Caco-2 (cell line): ENCODE measurements at regions of chr1 and their contacts with region 1.

Region 1: DNA sequence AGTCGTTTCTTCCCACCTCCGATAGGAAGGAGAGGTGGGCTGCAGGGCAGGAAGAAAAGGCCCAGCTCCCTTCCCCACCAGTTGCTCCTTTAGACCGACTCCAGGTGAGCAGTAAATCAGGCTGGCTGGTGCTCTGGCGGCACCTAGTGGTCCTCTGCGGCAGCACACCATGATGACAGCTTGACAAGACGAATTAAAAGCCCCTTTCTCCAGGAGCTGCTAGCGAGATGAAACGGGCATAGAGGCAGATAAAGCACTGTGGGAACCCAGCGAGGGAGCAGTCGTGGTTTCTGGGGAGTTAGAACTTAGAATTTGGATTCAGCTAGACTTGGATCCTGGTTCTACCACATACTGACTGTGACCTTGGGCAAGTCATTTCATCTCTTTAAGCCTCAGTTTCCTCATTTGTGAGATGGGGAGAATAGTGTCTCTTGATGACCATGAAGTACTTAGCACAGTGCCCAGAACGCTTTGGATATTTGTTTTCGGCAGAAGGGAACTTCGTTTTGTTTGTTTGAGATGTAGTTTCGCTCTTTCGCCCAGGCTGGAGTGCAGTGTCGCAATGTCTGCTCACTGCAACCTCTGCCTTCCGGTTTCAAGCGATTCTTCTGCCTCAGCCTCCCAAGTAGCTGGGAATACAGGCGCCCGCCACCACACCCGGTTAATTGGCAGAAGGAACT is 21.8 kb upstream of the COL9A2 start:
- DNase-seq: peak; percentile 83 to 84
- H3K4me3 ChIP-seq: no peak overlapping the region
- H3K4me3 Mint-ChIP-seq: peak overlapping the region; percentile 7
- H3K27ac Mint-ChIP-seq: no peak overlapping the region
- H3K4me1 ChIP-seq: no peaks in the 10 kb centered on the region
- H3K4me1 Mint-ChIP-seq: peaks cover 8% of the 10 kb centered on the region
- H3K27me3 ChIP-seq: no peaks in the 10 kb centered on the region
- H3K27me3 Mint-ChIP-seq: no peaks in the 10 kb centered on the region
- CTCF ChIP-seq: peak; percentile 83 to 89

Region 2: DNA sequence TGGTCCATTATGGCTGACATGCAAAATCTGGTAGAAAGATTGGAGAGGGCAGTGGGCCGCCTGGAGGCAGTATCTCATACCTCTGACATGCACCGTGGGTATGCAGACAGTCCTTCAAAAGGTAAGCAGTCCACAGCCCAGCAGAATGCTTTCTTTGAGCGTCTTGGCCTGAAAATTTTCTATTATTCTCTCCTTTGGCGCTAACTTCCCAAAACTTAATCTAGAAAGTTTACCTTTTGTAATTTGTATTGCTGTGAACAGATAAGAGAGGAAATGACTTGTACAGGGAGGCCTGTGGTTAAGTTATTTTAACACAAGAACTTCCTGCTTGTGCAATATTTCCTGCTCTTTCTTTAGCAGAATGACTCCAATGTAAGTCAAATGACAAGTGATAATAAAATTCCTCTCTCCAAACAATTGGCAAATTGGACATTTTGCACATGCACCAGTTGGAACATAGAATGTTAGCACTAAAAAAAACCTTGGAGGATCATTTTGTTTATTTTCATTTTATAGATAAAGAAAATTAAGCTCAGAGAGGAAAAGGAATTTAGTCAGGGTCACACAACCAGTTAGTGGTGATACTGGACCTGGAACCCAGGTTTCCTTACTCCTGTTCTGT is 279.4 kb before region 1 on chr1:
- CTCF ChIA-PET with region 1: no interaction called
- POLR2A ChIA-PET with region 1: no interaction called
- intact Hi-C with region 1: no loop called
- DNase-seq: no peak
- H3K4me3 ChIP-seq: no peak overlapping the region
- H3K4me3 Mint-ChIP-seq: no peak overlapping the region
- H3K27ac Mint-ChIP-seq: no peak overlapping the region
- H3K4me1 ChIP-seq: peaks cover 11% of the 10 kb centered on the region; the same call in 1 of the 2 replicates
- H3K4me1 Mint-ChIP-seq: peaks cover 7% of the 10 kb centered on the region
- H3K27me3 ChIP-seq: no peaks in the 10 kb centered on the region
- H3K27me3 Mint-ChIP-seq: no peaks in the 10 kb centered on the region
- CTCF ChIP-seq: no peak

Region 3: DNA sequence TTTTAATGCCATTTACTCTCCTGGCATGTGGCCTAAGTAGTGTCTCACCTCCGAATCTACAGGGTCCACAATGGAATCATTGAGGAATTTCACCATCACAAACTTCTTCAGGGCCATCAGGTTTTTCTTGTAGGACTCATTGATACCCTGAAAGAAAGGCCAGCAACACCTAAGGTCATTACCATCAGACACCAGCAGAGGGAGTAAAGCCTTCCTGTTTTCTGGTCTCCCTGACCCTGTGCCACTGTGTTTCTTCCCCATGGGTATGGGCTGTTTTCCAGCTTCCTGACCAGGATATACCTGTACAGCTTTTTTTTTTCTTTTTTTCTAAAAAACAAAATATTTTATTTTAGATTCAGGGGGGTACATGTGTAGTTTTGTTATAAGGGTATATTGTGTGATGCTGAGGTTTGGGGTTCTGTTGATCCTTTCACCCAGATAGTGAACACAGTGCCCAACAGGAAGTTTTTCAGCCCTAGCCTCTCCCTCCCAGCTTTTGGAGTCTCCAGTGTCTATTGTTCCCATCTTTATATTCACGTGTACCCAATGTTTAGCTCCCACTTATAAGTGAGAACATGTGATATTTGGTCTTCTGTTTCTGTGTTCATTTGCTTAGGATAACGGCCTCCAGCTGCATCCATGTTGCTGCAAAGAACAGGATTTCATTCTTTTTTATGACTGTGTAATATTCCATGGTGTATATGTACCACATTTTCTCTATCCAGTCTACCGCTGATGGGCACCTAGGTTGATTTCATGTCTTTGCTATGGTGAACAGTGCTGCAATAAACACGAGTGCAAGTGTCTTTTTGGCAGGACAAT is 260.2 kb before region 1 on chr1:
- CTCF ChIA-PET with region 1: interaction called, 6 read pairs
- POLR2A ChIA-PET with region 1: no interaction called
- intact Hi-C with region 1: loop called (anchors 1 kb)
- DNase-seq: peak; percentile 58 to 75
- H3K4me3 ChIP-seq: no peak overlapping the region
- H3K4me3 Mint-ChIP-seq: no peak overlapping the region
- H3K27ac Mint-ChIP-seq: no peak overlapping the region
- H3K4me1 ChIP-seq: no peaks in the 10 kb centered on the region
- H3K4me1 Mint-ChIP-seq: no peaks in the 10 kb centered on the region
- H3K27me3 ChIP-seq: no peaks in the 10 kb centered on the region
- H3K27me3 Mint-ChIP-seq: no peaks in the 10 kb centered on the region
- CTCF ChIP-seq: peak; percentile 62 to 70

Region 4: DNA sequence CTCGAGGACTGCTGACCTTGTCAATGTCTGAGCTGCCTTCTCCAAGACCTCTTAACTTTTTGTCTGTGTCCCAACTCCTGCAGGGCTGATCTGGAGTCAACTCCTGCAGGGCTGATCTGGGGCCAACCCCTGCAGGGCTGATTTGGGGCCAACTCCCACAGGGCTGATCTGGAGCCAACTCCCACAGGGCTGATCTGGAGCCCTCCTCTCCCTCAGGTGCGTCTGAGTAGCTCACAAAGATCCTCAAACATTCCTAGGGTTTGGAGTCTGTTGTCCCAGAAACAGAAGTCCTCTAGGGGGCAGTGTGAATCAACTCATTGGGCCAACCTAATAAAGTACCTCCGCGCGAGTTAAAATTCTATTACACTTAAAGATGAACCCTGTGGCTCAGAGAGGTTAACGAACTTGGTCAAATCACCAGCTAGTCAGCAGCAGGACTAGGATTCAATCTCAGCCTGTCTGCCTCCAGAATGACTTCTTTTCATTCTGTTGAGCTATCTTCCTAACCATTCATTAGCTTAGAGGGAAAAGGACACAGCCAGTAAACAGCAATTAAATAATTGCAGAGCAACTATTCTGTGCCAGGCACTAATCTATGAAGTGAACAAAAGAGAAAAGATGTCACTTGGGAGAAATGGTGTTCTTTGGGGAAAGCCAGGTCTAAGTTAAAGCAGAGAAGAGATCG is 194.9 kb before region 1 on chr1:
- CTCF ChIA-PET with region 1: interaction called, 29 read pairs
- POLR2A ChIA-PET with region 1: no interaction called
- intact Hi-C with region 1: loop called (anchors 1 kb)
- DNase-seq: peak; percentile 52 to 70
- H3K4me3 ChIP-seq: no peak overlapping the region
- H3K4me3 Mint-ChIP-seq: peak overlapping the region; percentile 41
- H3K27ac Mint-ChIP-seq: peak overlapping the region; percentile 71
- H3K4me1 ChIP-seq: peaks cover 13% of the 10 kb centered on the region
- H3K4me1 Mint-ChIP-seq: peaks cover 19% of the 10 kb centered on the region
- H3K27me3 ChIP-seq: no peaks in the 10 kb centered on the region
- H3K27me3 Mint-ChIP-seq: no peaks in the 10 kb centered on the region
- CTCF ChIP-seq: peak; percentile 19 to 67

Region 5: DNA sequence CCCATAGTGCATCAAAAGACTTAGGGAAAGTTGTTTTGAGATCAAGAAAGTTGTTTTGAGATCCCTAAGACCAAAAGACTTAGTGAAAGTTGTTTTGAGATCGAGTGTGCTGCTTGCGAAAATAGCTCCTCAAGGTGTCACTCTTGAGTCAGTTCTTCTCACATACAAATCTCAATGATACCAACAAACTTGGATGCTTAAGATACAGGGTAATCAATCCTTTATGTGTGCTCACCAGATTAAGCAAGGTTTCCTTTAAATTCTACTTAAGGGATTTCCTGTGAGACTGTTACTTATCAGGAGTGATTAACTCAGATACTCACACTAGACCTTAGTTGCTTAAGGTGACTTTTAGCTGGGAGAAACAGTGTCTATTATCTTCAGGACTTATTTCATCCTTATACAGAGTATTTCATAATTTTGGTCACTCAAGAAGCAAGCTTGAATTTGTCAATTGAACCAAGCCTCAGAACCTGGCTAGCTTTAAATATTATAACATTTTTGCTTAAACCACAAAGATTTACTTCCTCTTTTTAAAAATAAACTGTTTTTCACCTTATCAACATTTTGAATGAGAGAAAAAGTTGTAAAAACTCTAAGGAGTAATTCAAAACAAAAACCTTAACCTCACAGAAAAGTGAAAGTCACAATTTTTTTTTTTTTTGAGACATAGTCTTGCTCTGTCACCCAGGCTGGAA is 185.7 kb before region 1 on chr1:
- CTCF ChIA-PET with region 1: interaction called, 18 read pairs
- POLR2A ChIA-PET with region 1: no interaction called
- intact Hi-C with region 1: no loop called
- DNase-seq: peak in 1 of 2 experiments; percentile 37
- H3K4me3 ChIP-seq: no peak overlapping the region
- H3K4me3 Mint-ChIP-seq: no peak overlapping the region
- H3K27ac Mint-ChIP-seq: no peak overlapping the region
- H3K4me1 ChIP-seq: no peaks in the 10 kb centered on the region
- H3K4me1 Mint-ChIP-seq: no peaks in the 10 kb centered on the region
- H3K27me3 ChIP-seq: no peaks in the 10 kb centered on the region
- H3K27me3 Mint-ChIP-seq: no peaks in the 10 kb centered on the region
- CTCF ChIP-seq: peak; percentile 45 to 50

Region 6: GRCh38 chr1:40221977-40222772 is 116.7 kb before region 1 on chr1:
- CTCF ChIA-PET with region 1: no interaction called
- POLR2A ChIA-PET with region 1: no interaction called
- intact Hi-C with region 1: no loop called
- DNase-seq: no peak
- H3K4me3 ChIP-seq: no peak overlapping the region
- H3K4me3 Mint-ChIP-seq: no peak overlapping the region
- H3K27ac Mint-ChIP-seq: no peak overlapping the region
- H3K4me1 ChIP-seq: no peaks in the 10 kb centered on the region
- H3K4me1 Mint-ChIP-seq: no peaks in the 10 kb centered on the region
- H3K27me3 ChIP-seq: no peaks in the 10 kb centered on the region
- H3K27me3 Mint-ChIP-seq: no peaks in the 10 kb centered on the region
- CTCF ChIP-seq: no peak

Region 7: GRCh38 chr1:40291293-40291692 is 47.6 kb before region 1 on chr1:
- CTCF ChIA-PET with region 1: no interaction called
- POLR2A ChIA-PET with region 1: no interaction called
- intact Hi-C with region 1: no loop called
- DNase-seq: no peak
- H3K4me3 ChIP-seq: no peak overlapping the region
- H3K4me3 Mint-ChIP-seq: no peak overlapping the region
- H3K27ac Mint-ChIP-seq: no peak overlapping the region
- H3K4me1 ChIP-seq: no peaks in the 10 kb centered on the region
- H3K4me1 Mint-ChIP-seq: no peaks in the 10 kb centered on the region
- H3K27me3 ChIP-seq: no peaks in the 10 kb centered on the region
- H3K27me3 Mint-ChIP-seq: no peaks in the 10 kb centered on the region
- CTCF ChIP-seq: no peak

Region 8: DNA sequence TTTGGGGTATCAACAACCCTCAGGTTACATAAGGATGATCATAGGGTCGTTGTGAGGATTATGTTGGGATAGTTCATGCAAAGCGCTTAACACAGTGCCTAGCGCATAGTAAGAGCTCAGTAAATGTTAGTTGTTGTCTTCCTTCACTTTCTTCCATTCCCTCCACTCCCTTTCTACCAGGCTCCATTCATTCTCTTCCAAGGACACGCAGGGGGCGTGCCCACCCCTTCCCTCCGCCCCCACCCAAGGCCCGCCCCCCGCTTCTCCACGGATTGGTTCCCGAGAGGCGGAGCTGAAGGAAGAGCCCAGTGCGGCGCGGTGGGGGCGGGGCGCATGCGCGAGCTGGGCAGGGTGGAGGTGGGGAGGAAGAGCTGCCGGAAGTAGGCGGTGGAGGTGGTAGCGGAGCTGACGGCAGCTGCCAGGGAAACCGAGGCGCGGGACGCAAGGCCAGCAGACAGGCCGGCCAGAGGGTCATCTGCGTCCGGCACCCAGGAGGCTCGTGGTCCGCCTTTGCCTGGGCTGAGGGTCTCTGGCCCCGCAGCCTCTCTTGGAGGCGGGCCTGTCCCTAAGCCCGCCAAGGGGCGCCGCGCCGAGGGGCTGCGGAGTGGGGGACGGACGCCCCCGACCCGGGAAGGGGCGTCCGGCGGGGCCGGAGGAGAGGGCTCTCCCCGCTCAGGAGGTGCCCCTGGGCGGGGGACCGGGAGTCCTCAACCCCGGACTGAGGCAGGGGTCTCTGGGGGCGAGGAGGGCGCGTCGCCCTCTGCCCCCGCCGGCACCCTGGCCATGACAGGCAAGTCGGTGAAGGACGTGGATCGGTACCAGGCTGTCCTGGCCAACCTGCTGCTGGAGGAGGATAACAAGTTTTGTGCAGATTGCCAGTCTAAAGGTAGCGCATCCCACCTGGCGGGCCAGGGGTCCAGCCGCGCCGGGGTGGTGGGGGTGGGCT is 34.7 kb after region 1 on chr1 and contains the start of gene SMAP2:
- CTCF ChIA-PET with region 1: interaction called, 10 read pairs
- POLR2A ChIA-PET with region 1: no interaction called
- intact Hi-C with region 1: no loop called
- DNase-seq: peak; percentile 93
- H3K4me3 ChIP-seq: peak within 1 kb of the TSS; percentile 84
- H3K4me3 Mint-ChIP-seq: peak within 1 kb of the TSS; percentile 88
- H3K27ac Mint-ChIP-seq: peak within 1 kb of the TSS; percentile 13
- H3K4me1 ChIP-seq: no peaks in the 10 kb centered on the region
- H3K4me1 Mint-ChIP-seq: peaks cover 12% of the 10 kb centered on the region
- H3K27me3 ChIP-seq: no peaks in the 10 kb centered on the region
- H3K27me3 Mint-ChIP-seq: no peaks in the 10 kb centered on the region
- CTCF ChIP-seq: no peak
- total RNA-seq, gene SMAP2: 6.8 and 7.5 TPM in 2 replicates

Region 9: DNA sequence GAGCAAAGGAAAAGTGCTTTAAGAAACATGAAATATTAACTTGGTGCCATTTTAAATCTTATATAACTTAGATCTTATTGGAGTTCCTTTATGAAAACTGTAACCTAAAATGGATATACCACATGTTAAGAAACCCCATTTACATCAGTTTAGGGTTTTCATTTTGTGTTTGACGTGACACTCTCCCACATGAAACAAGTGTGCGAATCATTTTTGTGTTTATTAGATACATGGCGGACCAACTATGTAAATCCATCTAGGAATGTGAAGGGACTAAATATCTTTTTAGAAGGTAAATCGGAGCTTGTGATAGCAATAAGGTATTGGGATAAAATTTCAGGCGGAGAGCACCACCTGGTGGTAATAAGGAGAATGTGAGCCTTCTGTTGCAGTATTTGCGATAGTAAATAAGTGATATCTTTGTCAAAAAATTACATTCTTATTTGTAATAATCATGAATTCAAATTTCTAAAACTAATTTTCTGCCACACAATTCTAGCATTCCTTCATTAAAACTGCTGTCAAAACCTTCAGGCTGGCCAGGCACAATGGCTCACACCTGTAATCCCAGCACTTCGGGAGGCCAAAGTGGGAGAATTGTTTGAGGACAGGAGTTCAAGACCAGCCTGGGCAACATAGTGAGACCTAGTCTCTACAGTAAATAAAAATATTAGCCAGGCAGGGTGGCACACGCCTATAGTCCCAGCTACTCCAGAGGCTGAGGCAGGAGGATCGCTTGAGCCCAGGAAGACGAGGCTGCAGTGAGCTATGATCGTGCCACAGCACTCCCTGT is 66.0 kb after region 1 on chr1:
- CTCF ChIA-PET with region 1: interaction called, 15 read pairs
- POLR2A ChIA-PET with region 1: no interaction called
- intact Hi-C with region 1: loop called (anchors 2 kb)
- DNase-seq: peak in 1 of 2 experiments; percentile 19
- H3K4me3 ChIP-seq: no peak overlapping the region
- H3K4me3 Mint-ChIP-seq: no peak overlapping the region
- H3K27ac Mint-ChIP-seq: no peak overlapping the region
- H3K4me1 ChIP-seq: no peaks in the 10 kb centered on the region
- H3K4me1 Mint-ChIP-seq: no peaks in the 10 kb centered on the region
- H3K27me3 ChIP-seq: no peaks in the 10 kb centered on the region
- H3K27me3 Mint-ChIP-seq: no peaks in the 10 kb centered on the region
- CTCF ChIP-seq: peak; percentile 54 to 61